Posterior vena cava (tissue), 2 donors: ENCODE measurements at regions of chr1 and their contacts with region 1.

Region 1: GRCh38 chr1:21232044-21232443 is 55.3 kb upstream of the EIF4G3 start:
- DNase-seq: no peak

Region 2: DNA sequence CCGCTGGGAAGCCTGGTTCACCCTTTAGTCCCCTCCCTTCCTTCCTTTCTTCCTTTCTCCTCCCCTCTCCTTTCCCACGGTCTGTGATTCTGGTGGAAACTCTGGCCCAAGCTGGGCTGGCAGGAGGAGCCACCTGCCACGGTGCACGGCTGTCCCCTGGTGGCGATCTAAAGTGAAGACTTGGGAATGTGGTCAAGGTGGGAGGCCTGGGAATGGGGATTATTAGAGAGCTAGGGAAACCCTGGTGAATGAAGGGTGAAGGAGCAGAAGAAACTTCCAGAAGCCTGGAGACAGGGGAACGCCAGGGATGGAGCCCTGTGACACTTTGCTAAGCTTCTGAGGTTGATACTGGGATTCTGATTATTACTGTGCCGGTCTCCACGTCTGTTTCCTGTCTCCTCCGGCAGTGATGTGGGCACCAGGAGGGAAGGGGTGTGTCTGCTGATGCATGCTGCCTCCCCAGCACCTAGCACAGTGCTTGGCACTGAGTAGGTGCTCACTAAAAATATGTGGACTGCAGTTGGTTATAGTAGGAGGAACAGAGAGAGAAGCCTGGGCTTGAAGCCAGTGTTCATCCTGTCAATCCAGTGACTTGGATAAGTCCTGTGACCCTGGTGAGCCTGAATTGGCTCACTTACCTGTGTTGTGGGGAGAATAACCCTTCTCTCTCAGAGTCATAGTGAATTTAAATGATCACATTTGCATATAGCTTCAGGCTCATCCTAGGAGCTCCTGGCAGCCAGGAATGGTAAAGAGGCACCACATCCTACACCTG is 136.7 kb after region 1 on chr1:
- intact Hi-C with region 1: loop called (anchors 2 to 5 kb)
- DNase-seq: peak; percentile 92

Region 3: GRCh38 chr1:21451212-21451812 is 219.3 kb after region 1 on chr1:
- intact Hi-C with region 1: loop called in 1 of 2 experiments (anchors 10 kb)
- DNase-seq: no peak